ENCODE measurements at regions of chr1 and their contacts with region 1.

Region 1: DNA sequence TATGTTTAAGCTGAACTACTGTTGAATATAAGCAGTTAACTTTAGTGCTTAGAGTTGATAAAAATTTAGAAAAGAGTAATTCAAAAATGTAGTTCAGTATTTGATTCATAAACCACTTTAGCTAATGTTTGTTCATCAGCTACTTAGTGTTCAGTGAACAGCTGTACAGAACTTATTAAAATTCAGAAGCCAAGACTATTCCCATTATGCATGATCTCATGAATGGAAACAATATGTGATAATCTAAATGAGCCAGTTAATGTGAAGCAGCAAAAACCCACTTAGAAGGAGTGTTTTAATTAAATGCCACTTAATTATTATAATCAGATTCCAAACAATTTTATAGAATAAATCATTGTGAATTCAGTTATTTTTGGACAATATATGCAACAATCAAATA is 92.9 kb upstream of the NEGR1 start:
- DNase-seq: no peak
- H3K4me3 ChIP-seq: no peak overlapping the region
- H3K27ac ChIP-seq: no peak overlapping the region
- H3K4me1 ChIP-seq: no peaks in the 10 kb centered on the region
- H3K27me3 ChIP-seq: no peaks in the 10 kb centered on the region
- CTCF ChIP-seq: no peak
- POLR2A ChIP-seq: no peak

Region 2: GRCh38 chr1:72678683-72679082 is 303.5 kb after region 1 on chr1:
- intact Hi-C with region 1: loop called (anchors 5 kb)
- DNase-seq: no peak
- H3K4me3 ChIP-seq: no peak overlapping the region
- H3K27ac ChIP-seq: no peak overlapping the region
- H3K4me1 ChIP-seq: no peaks in the 10 kb centered on the region
- H3K27me3 ChIP-seq: no peaks in the 10 kb centered on the region
- CTCF ChIP-seq: no peak
- POLR2A ChIP-seq: no peak